ENCODE measurements at regions of chrX and their contacts with region 1.

Region 1: DNA sequence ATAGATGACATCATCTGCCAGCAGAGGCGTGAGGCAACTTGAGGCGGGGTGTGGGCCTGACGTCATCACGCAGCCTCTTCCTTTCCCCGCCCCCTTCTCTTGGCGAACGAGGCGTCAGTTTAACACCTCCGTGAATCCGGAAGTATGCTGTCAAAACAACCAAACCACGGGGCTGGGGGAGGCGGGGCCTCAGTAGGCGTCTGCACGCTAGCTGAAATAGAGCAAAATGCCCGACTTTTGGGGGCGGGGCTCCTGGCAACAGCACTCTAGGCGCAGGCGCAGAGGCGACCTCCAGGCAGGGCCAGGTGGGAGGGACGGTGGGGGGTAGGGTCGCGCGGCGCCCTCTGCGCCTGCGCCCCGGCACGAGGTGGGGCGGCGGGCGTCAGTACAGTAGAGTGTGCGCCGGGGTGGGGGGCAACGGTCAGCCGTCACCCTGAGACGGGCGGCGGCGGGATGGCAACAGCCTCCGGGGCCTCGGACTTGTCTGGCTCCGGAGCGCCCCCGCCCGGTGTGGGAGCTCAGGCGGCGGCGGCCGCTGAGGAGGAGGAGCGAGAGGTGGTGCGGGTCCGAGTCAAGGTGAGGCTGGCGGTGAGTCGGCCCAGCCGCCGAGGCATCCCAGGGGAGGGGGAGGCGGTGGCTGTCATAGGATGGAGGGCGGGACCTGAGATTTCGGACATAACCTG is at the start of gene TBC1D25:
- DNase-seq: peak; percentile 89 to 99 (median 96)
- ATAC-seq: peak; percentile 87
- H3K4me3 ChIP-seq: peak within 1 kb of the TSS; percentile 74
- H3K4me3 Mint-ChIP-seq: peak within 1 kb of the TSS; percentile 93
- H3K27ac ChIP-seq: peak within 1 kb of the TSS; percentile 84 to 95
- H3K27ac Mint-ChIP-seq: peak within 1 kb of the TSS; percentile 97
- H3K4me1 ChIP-seq: peaks cover 21% of the 10 kb centered on the region
- H3K4me1 Mint-ChIP-seq: peaks cover 20% of the 10 kb centered on the region
- H3K27me3 ChIP-seq: no peaks in the 10 kb centered on the region
- H3K27me3 Mint-ChIP-seq: no peaks in the 10 kb centered on the region
- CTCF ChIP-seq: peak; percentile 30
- total RNA-seq, gene TBC1D25: 26.7 to 30.5 TPM

Region 2: GRCh38 chrX:48083212-48083611 is 456.3 kb before region 1 on chrX:
- CTCF ChIA-PET with region 1: no interaction called
- POLR2A ChIA-PET with region 1: no interaction called
- intact Hi-C with region 1: loop called in 1 of 2 experiments (anchors 5 kb)
- DNase-seq: peak; percentile 12 to 65 (median 29)
- ATAC-seq: peak; percentile 67
- H3K4me3 ChIP-seq: no peak overlapping the region
- H3K4me3 Mint-ChIP-seq: no peak overlapping the region
- H3K27ac ChIP-seq: no peak overlapping the region
- H3K27ac Mint-ChIP-seq: no peak overlapping the region
- H3K4me1 ChIP-seq: no peaks in the 10 kb centered on the region
- H3K4me1 Mint-ChIP-seq: no peaks in the 10 kb centered on the region
- H3K27me3 ChIP-seq: no peaks in the 10 kb centered on the region
- H3K27me3 Mint-ChIP-seq: no peaks in the 10 kb centered on the region
- CTCF ChIP-seq: peak; percentile 51

Region 3: GRCh38 chrX:48468693-48469691 is 70.5 kb before region 1 on chrX:
- CTCF ChIA-PET with region 1: interaction called, 6 read pairs
- POLR2A ChIA-PET with region 1: interaction called, 11 read pairs
- intact Hi-C with region 1: no loop called
- DNase-seq: peak in 10 of 14 experiments; percentile 21 to 63 (median 42)
- ATAC-seq: peak; percentile 45
- H3K4me3 ChIP-seq: peak overlapping the region; percentile 73
- H3K4me3 Mint-ChIP-seq: peak overlapping the region; percentile 94
- H3K27ac ChIP-seq: no peak overlapping the region
- H3K27ac Mint-ChIP-seq: peak overlapping the region; percentile 75
- H3K4me1 ChIP-seq: peaks cover 25% of the 10 kb centered on the region
- H3K4me1 Mint-ChIP-seq: peaks cover 40% of the 10 kb centered on the region
- H3K27me3 ChIP-seq: no peaks in the 10 kb centered on the region
- H3K27me3 Mint-ChIP-seq: no peaks in the 10 kb centered on the region
- CTCF ChIP-seq: peak; percentile 33

Region 4: GRCh38 chrX:48475774-48476577 is 63.5 kb before region 1 on chrX and contains the start of gene FTSJ1:
- CTCF ChIA-PET with region 1: interaction called, 3 read pairs
- POLR2A ChIA-PET with region 1: interaction called, 6 read pairs
- intact Hi-C with region 1: loop called (anchors 5 kb)
- DNase-seq: peak; percentile 77 to 97 (median 84)
- ATAC-seq: peak; percentile 90
- H3K4me3 ChIP-seq: peak within 1 kb of the TSS; percentile 92
- H3K4me3 Mint-ChIP-seq: peak within 1 kb of the TSS; percentile 90
- H3K27ac ChIP-seq: peak within 1 kb of the TSS; percentile 73 to 79
- H3K27ac Mint-ChIP-seq: peak within 1 kb of the TSS; percentile 74
- H3K4me1 ChIP-seq: peaks cover 22% of the 10 kb centered on the region
- H3K4me1 Mint-ChIP-seq: peaks cover 27% of the 10 kb centered on the region
- H3K27me3 ChIP-seq: no peaks in the 10 kb centered on the region
- H3K27me3 Mint-ChIP-seq: no peaks in the 10 kb centered on the region
- CTCF ChIP-seq: no peak
- total RNA-seq, gene FTSJ1: 60.0 to 61.0 TPM

Region 5: DNA sequence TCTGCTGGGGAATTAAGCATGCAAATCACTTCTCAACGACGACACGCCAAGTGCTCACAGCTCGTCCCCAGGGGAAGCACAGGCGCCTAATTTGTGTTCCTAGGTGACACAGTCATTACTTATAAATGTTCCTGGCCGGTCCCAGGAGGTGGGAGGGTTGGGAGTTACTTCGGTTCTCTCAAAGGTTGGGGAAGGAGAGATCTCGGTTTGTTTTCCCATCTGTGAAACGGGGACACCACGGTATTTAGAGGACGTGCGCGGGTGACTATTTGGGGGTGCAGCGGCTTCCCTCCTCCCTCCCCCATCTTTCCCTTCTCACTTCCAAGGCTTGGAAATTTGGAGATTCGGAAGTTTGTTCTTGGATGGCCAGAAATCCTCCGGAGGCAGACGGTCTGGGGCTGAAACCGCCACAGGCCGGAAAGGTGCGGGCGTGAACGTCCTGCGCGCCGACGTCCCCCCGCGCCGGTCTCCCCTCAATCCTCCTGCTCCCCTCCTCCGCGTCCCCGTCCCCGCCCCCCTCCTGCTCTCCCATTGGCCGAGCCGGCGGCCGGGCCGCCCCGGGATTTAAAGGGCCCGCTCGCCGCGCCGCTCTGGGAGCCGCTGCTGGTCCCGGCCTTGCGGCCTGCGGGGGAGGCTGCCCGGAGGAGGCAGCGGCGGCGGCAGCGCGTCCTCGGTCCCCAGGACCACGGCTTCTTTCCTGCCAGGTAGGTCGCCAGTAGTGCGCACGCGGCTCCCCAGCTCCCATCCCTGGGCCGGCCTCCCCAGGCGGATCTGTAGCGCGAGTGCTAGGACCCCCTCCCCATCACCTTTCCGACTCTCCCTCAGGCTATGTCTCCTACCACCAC is 30.9 kb before region 1 on chrX and contains the start of gene PORCN:
- CTCF ChIA-PET with region 1: interaction called, 3 read pairs
- POLR2A ChIA-PET with region 1: interaction called, 20 read pairs
- intact Hi-C with region 1: loop called in 1 of 2 experiments (anchors 1 kb)
- DNase-seq: peak; percentile 55 to 84 (median 76)
- ATAC-seq: peak; percentile 94
- H3K4me3 ChIP-seq: peak within 1 kb of the TSS; percentile 79
- H3K4me3 Mint-ChIP-seq: peak within 1 kb of the TSS; percentile 94
- H3K27ac ChIP-seq: peak within 1 kb of the TSS; percentile 41 to 55
- H3K27ac Mint-ChIP-seq: peak within 1 kb of the TSS; percentile 84
- H3K4me1 ChIP-seq: peaks cover 19% of the 10 kb centered on the region
- H3K4me1 Mint-ChIP-seq: peaks cover 26% of the 10 kb centered on the region
- H3K27me3 ChIP-seq: no peaks in the 10 kb centered on the region
- H3K27me3 Mint-ChIP-seq: no peaks in the 10 kb centered on the region
- CTCF ChIP-seq: no peak
- total RNA-seq, gene PORCN: 12.0 to 14.1 TPM

Region 6: DNA sequence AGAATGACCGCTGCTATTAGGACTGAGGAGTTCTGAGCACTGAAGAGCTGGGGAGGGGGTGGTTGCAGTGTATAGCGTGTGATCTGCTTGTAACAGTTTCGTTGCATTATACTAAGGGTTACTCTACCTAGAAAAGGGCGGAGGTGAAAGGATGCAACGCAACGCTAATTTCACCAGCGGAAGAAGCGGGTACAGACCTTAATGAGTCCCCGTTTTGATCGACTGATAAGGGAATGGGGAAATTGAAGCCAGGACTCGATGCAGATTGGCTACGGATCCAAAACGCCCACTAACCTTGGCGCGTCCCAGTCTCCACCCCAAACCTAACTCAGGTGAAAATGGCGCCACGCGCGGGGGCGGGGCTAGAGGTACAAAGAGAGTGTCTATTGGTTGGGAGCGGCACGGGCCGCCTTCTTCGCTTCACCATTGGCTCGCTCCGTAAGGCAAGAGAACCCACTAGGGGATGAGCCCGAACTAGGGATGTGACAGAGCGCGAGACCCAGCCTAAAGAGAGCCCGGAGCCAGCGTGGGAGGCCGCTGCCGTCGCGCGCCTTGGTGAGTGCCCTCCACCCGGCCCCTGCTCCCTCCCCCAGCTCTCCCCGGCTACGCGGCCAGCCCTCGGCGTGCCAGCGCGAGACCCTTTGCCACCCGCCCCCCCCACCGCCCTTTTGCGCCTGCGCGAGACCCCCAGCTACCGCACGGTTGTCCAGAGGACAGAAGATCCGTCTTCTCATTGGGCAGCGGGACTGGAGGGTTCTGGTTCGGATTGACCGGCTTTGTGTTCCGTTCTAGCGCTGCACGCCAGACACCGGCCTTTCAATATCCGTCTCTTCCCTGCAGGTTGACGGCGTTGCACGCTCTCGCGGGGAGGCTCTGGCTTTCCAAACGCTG is 17.9 kb before region 1 on chrX and contains the start of gene EBP:
- CTCF ChIA-PET with region 1: interaction called, 9 read pairs
- POLR2A ChIA-PET with region 1: interaction called, 18 read pairs
- intact Hi-C with region 1: loop called (anchors 1 to 2 kb)
- DNase-seq: peak; percentile 87 to 97 (median 92)
- ATAC-seq: peak; percentile 96
- H3K4me3 ChIP-seq: peak within 1 kb of the TSS; percentile 76
- H3K4me3 Mint-ChIP-seq: peak within 1 kb of the TSS; percentile 92
- H3K27ac ChIP-seq: peak within 1 kb of the TSS; percentile 65
- H3K27ac Mint-ChIP-seq: peak within 1 kb of the TSS; percentile 89
- H3K4me1 ChIP-seq: peaks cover 41% of the 10 kb centered on the region
- H3K4me1 Mint-ChIP-seq: peaks cover 35% of the 10 kb centered on the region
- H3K27me3 ChIP-seq: no peaks in the 10 kb centered on the region
- H3K27me3 Mint-ChIP-seq: no peaks in the 10 kb centered on the region
- CTCF ChIP-seq: no peak
- total RNA-seq, gene EBP: 38.1 to 41.1 TPM